AG04450 (cell line): ENCODE measurements at regions of chr11 and their contacts with region 1.

Region 1: GRCh38 chr11:124837491-124837856 is 27.8 kb upstream of the ROBO3 start:
- DNase-seq: peak; percentile 66
- H3K4me3 ChIP-seq: no peak overlapping the region
- H3K27ac ChIP-seq: no peak overlapping the region
- H3K27me3 ChIP-seq: peaks cover 44% of the 10 kb centered on the region
- CTCF ChIP-seq: peak; percentile 81

Region 2: DNA sequence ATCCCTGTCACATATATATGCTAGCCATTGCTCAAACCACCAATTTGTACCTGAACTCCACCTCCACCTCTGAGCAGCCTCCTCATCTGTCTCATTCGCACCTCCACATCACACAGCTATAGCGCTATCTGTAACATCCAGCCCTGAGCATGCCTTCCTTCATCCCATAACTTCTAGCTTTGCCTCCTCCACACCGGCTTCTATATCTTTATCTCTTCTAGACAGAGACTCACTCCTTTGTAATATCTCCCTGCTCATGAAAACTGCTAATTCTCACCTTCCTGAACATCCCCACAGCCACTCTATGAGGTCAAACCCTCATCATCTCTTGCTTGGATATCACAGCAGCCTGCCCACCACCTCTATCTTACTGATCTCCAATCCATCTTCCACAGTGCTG is 169.9 kb before region 1 on chr11:
- CTCF ChIA-PET with region 1: interaction called, 164 read pairs
- POLR2A ChIA-PET with region 1: interaction called, 4 read pairs
- DNase-seq: no peak
- H3K4me3 ChIP-seq: no peak overlapping the region
- H3K27ac ChIP-seq: no peak overlapping the region
- H3K27me3 ChIP-seq: no peaks in the 10 kb centered on the region
- CTCF ChIP-seq: no peak

Region 3: DNA sequence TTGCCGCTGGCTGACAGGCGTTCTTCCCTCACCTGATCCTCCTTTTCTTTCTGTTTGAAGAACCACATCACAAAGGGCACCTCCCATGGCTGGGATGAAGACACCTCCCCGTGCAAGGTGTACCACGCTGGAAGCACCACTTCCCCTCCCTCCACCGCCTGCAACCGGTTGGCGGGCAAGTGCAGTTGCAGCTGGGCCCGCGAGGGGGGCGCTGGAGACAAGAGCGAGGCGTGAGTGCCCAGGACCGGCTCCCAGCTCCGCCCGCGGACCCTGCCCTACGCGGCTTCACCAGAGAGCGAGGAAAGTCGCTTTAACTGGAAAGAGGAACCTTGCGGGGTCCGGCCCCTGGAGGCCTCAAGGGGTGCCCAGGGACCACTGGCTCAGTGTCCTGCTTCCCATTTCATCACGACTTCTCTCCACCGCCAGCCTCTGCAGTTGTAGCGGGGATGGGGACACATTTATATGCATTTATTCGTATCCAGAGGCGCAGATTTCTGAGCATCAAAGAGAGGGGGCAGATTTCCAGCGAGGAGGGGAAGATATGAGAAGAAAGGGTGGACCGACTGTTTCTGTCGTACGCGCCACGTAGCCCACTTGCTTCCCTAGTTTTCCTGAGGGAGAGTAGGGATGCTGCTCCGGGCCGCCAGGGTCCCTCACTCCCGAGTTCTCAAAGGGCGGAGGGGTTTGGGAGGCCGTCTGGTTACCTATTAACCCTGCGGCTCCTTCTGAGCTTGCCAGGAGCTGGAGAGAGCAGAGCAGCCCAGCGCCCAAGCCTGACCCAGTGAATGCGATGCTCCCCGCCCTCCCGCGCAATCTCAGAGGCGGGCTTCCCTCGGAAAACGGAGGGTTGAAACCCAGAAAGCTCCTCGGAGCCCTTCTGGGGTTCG is 78.9 kb before region 1 on chr11:
- CTCF ChIA-PET with region 1: interaction called, 11 read pairs
- POLR2A ChIA-PET with region 1: no interaction called
- DNase-seq: no peak
- H3K4me3 ChIP-seq: peak overlapping the region; percentile 46
- H3K27ac ChIP-seq: no peak overlapping the region
- H3K27me3 ChIP-seq: peaks cover 24% of the 10 kb centered on the region
- CTCF ChIP-seq: peak; percentile 66

Region 4: GRCh38 chr11:124800226-124800929 is 37.1 kb before region 1 on chr11 and contains the start of gene MSANTD2:
- CTCF ChIA-PET with region 1: interaction called, 27 read pairs
- POLR2A ChIA-PET with region 1: interaction called, 8 read pairs
- DNase-seq: peak; percentile 48
- H3K4me3 ChIP-seq: peak within 1 kb of the TSS; percentile 83
- H3K27ac ChIP-seq: peak within 1 kb of the TSS; percentile 96
- H3K27me3 ChIP-seq: no peaks in the 10 kb centered on the region
- CTCF ChIP-seq: no peak
- polyA plus RNA-seq, gene MSANTD2: 7.6 and 9.8 TPM in 2 replicates

Region 5: GRCh38 chr11:124855437-124855836 is 18.0 kb after region 1 on chr11:
- CTCF ChIA-PET with region 1: interaction called, 25 read pairs
- POLR2A ChIA-PET with region 1: no interaction called
- DNase-seq: no peak
- H3K4me3 ChIP-seq: no peak overlapping the region
- H3K27ac ChIP-seq: no peak overlapping the region
- H3K27me3 ChIP-seq: peaks cover 55% of the 10 kb centered on the region
- CTCF ChIP-seq: no peak

Region 6: DNA sequence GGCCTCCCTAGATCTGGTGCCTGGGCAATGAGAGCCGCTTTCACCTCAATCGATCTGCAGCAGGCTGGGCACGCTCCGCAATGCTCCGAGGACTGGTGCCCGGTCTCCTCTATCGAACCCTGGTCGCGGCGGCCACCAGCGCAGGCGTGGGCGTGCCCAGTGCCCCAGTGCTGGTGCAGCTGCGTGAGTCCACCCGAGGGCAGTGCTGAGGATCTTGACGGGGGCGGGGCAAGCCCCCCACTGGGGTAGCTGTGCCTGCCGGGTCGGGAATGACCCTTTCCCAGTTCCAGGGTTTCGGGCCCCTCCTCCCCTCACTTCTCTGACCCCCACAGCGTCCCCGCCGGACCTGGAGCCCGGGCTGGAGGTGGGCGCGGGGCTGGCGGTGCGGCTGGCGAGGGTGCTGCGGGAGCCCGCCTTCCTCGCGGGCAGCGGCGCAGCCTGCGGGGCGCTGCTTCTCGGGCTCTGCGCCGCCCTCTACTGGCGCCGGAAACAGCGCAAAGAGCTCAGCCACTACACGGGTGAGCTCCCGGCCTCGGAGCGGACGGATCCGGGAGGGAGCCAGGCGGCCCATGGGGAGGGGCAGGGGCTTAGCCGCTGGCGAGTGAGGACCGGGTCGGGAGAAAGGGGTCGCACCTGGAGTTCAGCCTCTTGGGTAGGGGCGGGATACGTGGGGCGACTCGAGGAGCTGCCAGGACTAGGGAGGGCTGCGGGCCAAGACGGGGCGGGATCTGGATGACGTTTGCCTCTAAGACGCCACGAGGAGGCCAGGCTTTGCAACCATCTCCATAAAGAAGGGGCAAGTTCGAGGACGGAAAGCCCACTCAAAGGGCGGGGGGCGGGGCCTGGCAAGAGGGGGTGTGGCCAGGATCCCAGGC is 38.7 kb after region 1 on chr11:
- CTCF ChIA-PET with region 1: interaction called, 24 read pairs
- POLR2A ChIA-PET with region 1: interaction called, 5 read pairs
- DNase-seq: peak; percentile 94
- H3K4me3 ChIP-seq: peak overlapping the region; percentile 73
- H3K27ac ChIP-seq: peak overlapping the region; percentile 97
- H3K27me3 ChIP-seq: peaks cover 21% of the 10 kb centered on the region
- CTCF ChIP-seq: peak; percentile 65

Region 7: DNA sequence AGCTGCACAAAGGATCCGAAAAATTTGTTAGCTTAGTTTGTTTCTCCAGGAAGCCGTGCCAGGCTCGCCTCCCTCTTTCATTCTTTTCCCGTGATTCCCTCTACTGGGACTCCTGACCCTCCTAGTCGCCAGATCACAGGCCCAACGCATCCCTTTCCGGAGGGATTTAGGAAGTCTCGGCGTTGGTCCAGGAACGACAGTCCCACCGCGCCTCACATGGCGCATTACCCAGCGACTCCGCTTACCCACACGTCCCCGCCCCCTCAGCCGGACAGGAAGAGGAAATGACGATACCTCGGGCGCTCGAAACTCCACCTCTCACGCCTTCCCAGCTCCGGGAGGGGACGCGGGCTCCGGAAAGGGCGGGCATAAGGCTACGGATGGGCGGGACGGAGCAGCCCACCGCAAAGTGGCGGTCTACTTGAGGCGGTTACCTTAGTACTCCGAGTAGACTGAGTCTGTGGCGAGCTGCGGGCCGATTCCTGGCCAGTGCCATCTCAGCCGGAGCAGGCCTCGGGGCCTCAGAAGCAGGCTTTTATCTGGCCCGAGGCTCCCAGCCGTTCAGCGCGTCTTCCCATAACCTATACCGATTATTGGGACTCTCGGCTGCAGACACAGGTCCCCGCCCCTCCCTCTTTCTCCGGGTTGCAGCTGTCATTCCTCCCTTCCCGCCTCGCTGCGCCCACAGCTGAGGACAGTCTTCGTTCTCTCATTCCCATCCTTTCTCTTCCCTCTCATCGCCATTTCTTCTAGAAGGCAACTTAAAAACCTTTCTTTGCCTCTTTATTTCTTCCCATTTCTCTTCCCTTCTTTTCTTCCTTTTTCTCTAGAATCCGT is 116.5 kb after region 1 on chr11 and contains the start of gene CCDC15:
- CTCF ChIA-PET with region 1: no interaction called
- POLR2A ChIA-PET with region 1: no interaction called
- DNase-seq: peak; percentile 92
- H3K4me3 ChIP-seq: peak within 1 kb of the TSS; percentile 61
- H3K27ac ChIP-seq: peak within 1 kb of the TSS; percentile 87
- H3K27me3 ChIP-seq: no peaks in the 10 kb centered on the region
- CTCF ChIP-seq: no peak
- polyA plus RNA-seq, gene CCDC15: 0.73 and 1.1 TPM in 2 replicates

Region 8: DNA sequence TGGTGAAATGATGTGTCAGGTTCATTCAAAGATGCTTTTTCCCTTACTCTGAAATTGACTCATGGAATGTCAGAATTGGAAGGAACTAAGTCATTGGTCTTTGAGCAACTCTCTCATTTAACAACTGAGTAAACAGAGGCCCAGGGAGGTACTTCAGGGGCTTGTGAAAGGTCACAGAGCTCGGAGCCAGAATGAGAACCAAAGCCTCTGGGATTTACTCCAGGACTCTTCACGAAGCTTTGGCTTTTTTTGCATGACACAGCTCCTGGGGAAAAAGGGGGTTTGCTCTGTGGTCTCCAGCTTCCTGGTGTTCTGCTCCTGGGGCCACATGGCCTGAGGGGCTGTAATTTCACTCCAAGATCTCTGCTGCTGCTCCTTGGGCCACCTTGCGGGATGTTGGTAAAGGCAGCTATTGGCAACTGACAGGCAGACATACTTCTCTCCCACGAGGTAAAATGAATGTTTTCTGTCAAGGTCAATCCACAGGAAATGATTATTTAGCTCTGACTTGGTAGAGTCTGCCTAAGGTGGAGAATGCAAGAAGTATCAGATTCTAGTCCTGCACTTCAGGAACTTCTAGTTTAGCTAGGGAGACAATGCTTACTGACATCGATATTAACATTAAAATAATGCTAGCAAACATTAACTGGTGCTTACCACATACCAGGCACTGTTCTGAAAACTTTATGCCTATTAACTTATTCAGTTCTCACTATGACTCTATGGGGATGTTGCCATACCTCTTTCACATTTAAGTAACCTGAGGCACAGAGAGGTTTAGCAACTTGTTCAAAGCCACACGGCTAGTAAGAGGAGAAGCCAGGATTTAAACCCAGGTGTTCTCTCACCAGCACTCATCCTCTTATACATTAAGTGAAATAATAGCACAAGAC is 343.2 kb after region 1 on chr11:
- CTCF ChIA-PET with region 1: no interaction called
- POLR2A ChIA-PET with region 1: no interaction called
- DNase-seq: no peak
- H3K4me3 ChIP-seq: no peak overlapping the region
- H3K27ac ChIP-seq: peak overlapping the region; percentile 39
- H3K27me3 ChIP-seq: peaks cover 13% of the 10 kb centered on the region
- CTCF ChIP-seq: no peak